Calu3 (cell line): ENCODE measurements at regions of chr14 and their contacts with region 1.

Region 1: DNA sequence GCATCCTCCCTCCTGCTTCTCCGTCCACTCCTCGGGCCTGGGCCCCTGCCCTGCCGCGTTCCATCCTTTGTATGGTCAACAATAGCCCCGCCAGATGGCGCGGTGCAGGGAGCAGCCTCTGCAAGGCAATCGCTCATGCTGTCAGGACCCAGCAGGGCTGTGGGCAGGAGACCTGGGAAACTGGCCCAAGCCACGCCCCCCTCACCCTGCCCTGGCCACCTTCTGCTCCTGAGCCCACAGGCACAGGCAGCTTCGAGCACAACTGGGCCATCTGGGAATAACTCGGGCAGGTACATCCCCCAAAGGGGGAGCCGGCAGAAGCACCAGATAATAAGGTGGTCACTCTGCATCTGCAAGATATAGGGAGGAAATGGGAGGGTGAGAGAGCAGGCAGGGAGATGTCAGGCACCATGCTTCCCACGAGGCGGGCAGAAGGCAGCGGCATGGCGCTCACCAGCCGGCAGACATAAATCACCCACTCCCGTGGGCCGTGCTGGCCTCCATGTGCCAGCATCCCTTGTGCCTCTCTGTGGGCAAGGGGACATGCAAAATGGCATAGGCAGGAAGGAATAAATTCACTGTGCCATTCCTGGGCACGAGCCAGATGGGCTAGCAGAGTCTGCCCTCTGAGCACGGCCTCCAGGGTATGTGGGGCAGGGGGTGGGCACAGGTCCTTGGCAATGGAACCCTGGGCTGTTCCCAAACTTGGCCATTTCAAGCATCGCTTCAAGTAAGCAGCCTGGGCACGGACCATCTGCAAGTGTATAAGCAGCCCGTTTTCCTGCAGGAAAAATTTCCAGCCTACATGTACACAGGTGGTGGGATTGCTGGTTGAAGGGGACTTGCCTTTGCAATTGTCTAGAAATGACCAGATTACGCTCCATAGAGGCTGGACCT is 40.5 kb downstream of the CCDC85C start:
- DNase-seq: peak; percentile 93
- H3K4me3 Mint-ChIP-seq: no peak overlapping the region
- H3K27ac Mint-ChIP-seq: no peak overlapping the region
- H3K4me1 Mint-ChIP-seq: peaks cover 59% of the 10 kb centered on the region
- H3K27me3 Mint-ChIP-seq: no peaks in the 10 kb centered on the region
- CTCF ChIP-seq: peak; percentile 38

Region 2: DNA sequence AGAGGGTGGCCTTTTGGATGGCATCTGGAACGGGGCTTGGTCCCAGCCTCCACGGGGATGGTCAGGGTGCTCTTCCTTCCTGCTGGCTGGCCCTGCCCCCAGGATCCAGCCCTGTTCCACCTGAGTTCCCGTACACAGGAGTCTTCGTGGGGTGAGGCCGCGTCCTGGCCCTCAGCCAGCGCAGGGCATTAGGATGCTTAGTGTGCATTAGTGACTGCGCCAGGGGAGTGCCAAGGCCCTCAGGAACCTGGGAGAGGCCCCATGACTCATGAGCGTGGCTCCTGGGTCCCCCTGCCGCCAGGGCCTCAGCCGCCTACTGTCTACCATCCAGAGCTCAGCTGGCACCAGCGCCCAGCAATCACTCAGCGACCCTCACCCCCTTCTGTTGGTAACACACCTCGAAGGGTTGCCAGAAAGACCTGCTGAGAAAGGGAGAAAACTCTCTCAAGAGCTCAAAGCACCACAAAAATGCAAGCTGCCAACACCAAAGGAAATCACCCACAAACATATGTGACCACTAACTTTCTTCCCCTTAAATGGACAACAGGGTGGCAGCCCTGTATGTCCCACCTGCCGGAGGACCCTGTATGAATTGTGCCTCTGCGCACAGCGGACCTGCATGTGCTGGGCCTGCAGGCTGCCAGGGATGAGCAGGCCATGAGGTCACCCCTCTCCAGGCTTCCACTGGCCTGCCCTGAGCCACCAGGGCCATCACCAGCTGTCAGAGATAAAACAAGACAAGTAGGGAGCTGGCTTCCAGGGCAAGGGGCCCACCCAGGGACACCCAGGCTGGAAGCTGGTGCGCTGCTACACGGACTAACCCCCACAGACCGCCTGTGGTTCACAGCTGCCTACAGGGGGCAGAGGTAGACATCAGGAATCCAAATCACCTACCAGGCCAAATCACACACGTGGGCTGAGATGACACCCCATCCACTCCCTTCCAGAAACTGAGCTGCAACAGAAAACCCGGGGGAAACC is 11.9 kb after region 1 on chr14:
- CTCF ChIA-PET with region 1: interaction called, 6 read pairs
- intact Hi-C with region 1: loop called (anchors 2 kb)
- DNase-seq: peak; percentile 82
- H3K4me3 Mint-ChIP-seq: peak overlapping the region; percentile 55
- H3K27ac Mint-ChIP-seq: peak overlapping the region; percentile 60
- H3K4me1 Mint-ChIP-seq: peaks cover 69% of the 10 kb centered on the region
- H3K27me3 Mint-ChIP-seq: no peaks in the 10 kb centered on the region
- CTCF ChIP-seq: no peak

Region 3: DNA sequence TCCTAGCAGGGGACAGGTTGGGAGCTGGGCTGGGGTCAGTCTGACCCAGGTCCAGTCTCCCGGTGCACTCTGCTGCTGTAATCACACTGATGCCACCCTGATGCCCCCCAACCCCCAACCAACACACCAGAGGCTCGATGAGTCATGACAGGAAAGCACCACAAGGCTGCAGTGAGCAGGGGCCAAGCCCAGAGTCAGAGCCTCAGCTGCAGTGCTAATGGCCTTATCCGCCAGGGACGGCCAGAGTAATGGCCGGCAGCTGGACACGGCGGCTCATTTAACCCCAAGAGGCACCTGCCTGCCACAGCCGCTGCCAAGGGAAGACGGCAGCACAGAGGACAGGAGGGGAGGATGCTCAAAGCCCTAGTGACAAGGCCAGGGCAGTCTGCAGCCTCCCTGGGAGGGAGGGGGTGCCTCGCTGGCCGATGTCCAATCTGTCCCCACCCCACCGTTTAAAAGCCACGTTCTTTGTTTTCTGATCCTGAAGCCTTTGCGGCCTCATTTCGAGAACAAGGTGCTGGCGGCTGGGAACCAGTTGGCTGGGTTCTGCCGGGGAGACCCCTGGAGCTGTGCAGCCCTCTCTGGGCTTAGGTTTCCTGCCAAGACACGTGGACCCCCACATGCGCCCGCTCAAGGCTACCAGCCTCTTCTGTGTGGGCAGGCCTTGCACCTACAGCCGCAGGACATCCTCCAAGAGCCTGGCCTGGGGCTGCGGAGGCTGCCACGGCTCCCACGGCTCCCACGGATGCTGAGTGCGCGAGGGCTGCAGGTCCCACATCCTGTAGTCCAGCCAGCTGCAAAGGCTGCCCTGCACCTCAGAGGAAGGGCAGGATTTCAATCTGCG is 27.5 kb after region 1 on chr14:
- CTCF ChIA-PET with region 1: no interaction called
- intact Hi-C with region 1: no loop called
- DNase-seq: peak; percentile 34
- H3K4me3 Mint-ChIP-seq: no peak overlapping the region
- H3K27ac Mint-ChIP-seq: no peak overlapping the region
- H3K4me1 Mint-ChIP-seq: peaks cover 22% of the 10 kb centered on the region
- H3K27me3 Mint-ChIP-seq: no peaks in the 10 kb centered on the region
- CTCF ChIP-seq: no peak

Region 4: GRCh38 chr14:99604283-99604765 is 40.8 kb after region 1 on chr14:
- CTCF ChIA-PET with region 1: interaction called, 6 read pairs
- intact Hi-C with region 1: loop called (anchors 5 kb)
- DNase-seq: peak; percentile 98
- H3K4me3 Mint-ChIP-seq: peak overlapping the region; percentile 89
- H3K27ac Mint-ChIP-seq: peak overlapping the region; percentile 14
- H3K4me1 Mint-ChIP-seq: peaks cover 23% of the 10 kb centered on the region
- H3K27me3 Mint-ChIP-seq: no peaks in the 10 kb centered on the region
- CTCF ChIP-seq: no peak

Region 5: DNA sequence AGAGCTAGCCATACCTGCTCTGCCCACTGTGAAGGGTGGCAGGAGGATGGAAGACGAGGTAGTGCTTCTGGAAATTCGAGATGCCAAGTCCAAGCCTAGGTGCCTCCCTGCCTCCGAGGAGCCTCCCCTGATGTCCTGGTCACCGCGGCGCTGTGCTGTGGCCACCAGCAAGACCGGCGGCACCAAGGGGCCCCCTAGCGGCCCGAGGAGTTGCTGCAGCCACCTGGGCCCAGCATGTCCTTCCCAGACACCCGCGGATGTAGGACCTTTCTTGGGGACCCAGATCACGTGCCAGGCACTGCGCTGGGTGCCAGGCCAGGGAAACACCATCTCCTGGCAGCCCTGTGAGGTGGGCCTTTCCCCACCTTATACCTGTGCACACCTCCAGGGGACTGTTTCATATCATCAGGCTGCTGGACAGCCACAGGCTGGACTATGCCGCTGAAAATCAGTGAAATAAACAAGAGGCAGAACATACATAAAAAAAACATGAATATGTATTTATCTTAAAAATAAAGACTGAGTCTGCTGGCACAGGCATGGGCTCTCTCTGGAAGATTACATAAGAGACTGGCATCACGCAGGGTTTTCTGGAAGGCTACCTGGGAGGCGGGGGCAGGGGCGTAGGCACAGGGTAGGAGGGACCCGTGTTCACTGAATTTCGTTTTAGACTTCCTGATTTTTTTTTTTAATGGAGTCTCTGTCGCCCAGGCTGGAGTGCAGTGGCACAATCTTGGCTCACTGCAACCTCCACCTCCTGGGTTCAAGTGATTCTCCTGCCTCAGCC is 65.5 kb after region 1 on chr14:
- CTCF ChIA-PET with region 1: interaction called, 5 read pairs
- intact Hi-C with region 1: loop called (anchors 1 kb)
- DNase-seq: peak; percentile 88
- H3K4me3 Mint-ChIP-seq: no peak overlapping the region
- H3K27ac Mint-ChIP-seq: no peak overlapping the region
- H3K4me1 Mint-ChIP-seq: no peaks in the 10 kb centered on the region
- H3K27me3 Mint-ChIP-seq: peaks cover 38% of the 10 kb centered on the region
- CTCF ChIP-seq: peak; percentile 91